MCF 10A (cell line): ENCODE measurements at regions of chr14 and their contacts with region 1.

Region 1: GRCh38 chr14:76876076-76876475 is 49.9 kb downstream of the LRRC74A start:
- DNase-seq: peak; percentile 75
- H3K4me3 Mint-ChIP-seq: no peak overlapping the region
- H3K27ac Mint-ChIP-seq: no peak overlapping the region
- H3K4me1 Mint-ChIP-seq: no peaks in the 10 kb centered on the region
- H3K27me3 Mint-ChIP-seq: peaks cover 1% of the 10 kb centered on the region
- CTCF ChIP-seq: peak; percentile 95

Region 2: GRCh38 chr14:76863724-76864407 is 12.2 kb before region 1 on chr14:
- CTCF ChIA-PET with region 1: interaction called, 24 read pairs
- POLR2A ChIA-PET with region 1: no interaction called
- intact Hi-C with region 1: no loop called
- DNase-seq: no peak
- H3K4me3 Mint-ChIP-seq: no peak overlapping the region
- H3K27ac Mint-ChIP-seq: no peak overlapping the region
- H3K4me1 Mint-ChIP-seq: no peaks in the 10 kb centered on the region
- H3K27me3 Mint-ChIP-seq: peaks cover 43% of the 10 kb centered on the region
- CTCF ChIP-seq: no peak

Region 3: DNA sequence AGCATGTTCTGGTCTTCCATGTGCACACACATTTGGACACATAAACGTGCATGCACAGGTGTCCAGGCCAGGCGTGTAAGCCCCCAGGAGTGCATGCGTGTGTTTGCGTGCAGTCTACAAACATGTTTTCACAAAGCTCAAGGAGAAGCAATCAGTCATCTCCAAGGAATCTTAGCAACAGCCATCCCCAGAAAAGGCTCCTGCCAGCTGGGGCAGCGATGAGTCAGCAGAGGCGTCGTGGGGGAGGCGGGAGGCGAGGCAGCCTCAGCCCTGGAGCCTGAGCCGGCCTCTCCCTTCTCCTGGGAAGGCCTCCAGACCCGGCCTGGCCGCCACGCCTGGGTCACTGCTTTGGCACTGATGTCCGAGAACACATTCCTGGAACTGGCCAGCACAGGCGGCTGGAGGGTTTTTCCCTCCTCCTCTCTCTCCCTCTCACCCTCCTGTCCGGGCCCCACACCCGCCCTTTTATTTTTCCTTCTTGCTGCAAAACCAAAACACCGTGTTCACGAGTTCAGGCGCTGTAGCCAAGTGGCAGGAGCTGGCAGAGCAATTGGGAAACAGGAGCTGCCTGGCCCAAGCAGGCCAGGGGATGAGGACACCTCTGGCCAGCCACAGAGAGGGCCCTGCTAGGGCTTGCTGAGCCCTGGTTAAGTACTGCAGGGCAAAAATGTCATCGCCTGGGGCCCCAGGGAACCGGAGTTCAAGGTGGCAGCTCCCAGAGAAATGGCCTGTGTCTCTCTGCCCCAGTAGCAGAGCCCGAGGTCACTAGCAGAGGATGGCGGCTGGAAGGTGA is 42.9 kb after region 1 on chr14:
- CTCF ChIA-PET with region 1: interaction called, 186 read pairs
- POLR2A ChIA-PET with region 1: interaction called, 5 read pairs
- intact Hi-C with region 1: loop called (anchors 1 kb)
- DNase-seq: peak; percentile 98
- H3K4me3 Mint-ChIP-seq: peak overlapping the region; percentile 57
- H3K27ac Mint-ChIP-seq: peak overlapping the region; percentile 93
- H3K4me1 Mint-ChIP-seq: peaks cover 36% of the 10 kb centered on the region
- H3K27me3 Mint-ChIP-seq: no peaks in the 10 kb centered on the region
- CTCF ChIP-seq: no peak

Region 4: GRCh38 chr14:77028384-77029231 is 152.5 kb after region 1 on chr14 and contains the start of gene IRF2BPL:
- CTCF ChIA-PET with region 1: interaction called, 15 read pairs
- POLR2A ChIA-PET with region 1: interaction called, 4 read pairs
- intact Hi-C with region 1: no loop called
- DNase-seq: peak; percentile 98
- H3K4me3 Mint-ChIP-seq: peak within 1 kb of the TSS; percentile 81
- H3K27ac Mint-ChIP-seq: peak within 1 kb of the TSS; percentile 88
- H3K4me1 Mint-ChIP-seq: peaks cover 28% of the 10 kb centered on the region
- H3K27me3 Mint-ChIP-seq: no peaks in the 10 kb centered on the region
- CTCF ChIP-seq: no peak
- total RNA-seq, gene IRF2BPL: 22.1 and 26.0 TPM in 2 replicates

Region 5: GRCh38 chr14:77067632-77068514 is 191.8 kb after region 1 on chr14:
- CTCF ChIA-PET with region 1: interaction called, 523 read pairs
- POLR2A ChIA-PET with region 1: interaction called, 22 read pairs
- intact Hi-C with region 1: loop called (anchors 1 kb)
- DNase-seq: peak; percentile 74
- H3K4me3 Mint-ChIP-seq: no peak overlapping the region
- H3K27ac Mint-ChIP-seq: no peak overlapping the region
- H3K4me1 Mint-ChIP-seq: peaks cover 23% of the 10 kb centered on the region
- H3K27me3 Mint-ChIP-seq: no peaks in the 10 kb centered on the region
- CTCF ChIP-seq: peak; percentile 87

Region 6: DNA sequence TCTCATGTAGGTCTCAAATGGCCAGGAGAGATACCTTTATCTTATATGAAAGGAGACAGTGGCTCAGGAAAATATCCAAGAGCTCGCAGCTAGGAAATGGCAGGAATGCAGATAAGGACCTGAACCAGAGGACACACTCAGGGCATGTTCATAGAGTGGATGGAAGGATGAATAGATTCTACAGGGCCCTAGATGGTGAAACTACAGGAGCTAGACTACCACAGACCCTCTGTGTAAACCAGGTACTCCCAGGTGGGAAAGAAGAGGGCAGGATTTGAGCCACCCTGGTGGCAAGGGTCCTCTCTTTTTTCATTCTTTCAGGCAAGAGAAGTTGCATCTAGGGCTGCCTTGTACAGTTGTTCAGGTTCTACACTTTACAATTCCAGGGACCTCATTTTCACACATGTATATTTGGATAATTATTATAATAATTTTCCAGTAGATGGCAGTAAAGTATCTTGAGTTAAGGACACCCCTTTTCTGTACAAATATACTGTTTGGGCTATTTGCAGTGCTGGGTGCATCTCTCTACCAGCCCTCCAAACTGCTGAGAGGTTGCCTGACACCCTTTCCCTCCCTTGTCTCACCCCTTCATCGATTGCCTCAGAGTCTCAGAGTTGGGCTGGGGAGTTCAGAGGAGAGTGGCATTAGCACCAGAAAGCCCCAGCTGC is 276.0 kb after region 1 on chr14:
- CTCF ChIA-PET with region 1: interaction called, 46 read pairs
- POLR2A ChIA-PET with region 1: no interaction called
- intact Hi-C with region 1: no loop called
- DNase-seq: peak; percentile 31
- H3K4me3 Mint-ChIP-seq: no peak overlapping the region
- H3K27ac Mint-ChIP-seq: no peak overlapping the region
- H3K4me1 Mint-ChIP-seq: peaks cover 5% of the 10 kb centered on the region
- H3K27me3 Mint-ChIP-seq: peaks cover 4% of the 10 kb centered on the region
- CTCF ChIP-seq: peak; percentile 32